ENCODE measurements at regions of chr22 and their contacts with region 1.

Region 1: DNA sequence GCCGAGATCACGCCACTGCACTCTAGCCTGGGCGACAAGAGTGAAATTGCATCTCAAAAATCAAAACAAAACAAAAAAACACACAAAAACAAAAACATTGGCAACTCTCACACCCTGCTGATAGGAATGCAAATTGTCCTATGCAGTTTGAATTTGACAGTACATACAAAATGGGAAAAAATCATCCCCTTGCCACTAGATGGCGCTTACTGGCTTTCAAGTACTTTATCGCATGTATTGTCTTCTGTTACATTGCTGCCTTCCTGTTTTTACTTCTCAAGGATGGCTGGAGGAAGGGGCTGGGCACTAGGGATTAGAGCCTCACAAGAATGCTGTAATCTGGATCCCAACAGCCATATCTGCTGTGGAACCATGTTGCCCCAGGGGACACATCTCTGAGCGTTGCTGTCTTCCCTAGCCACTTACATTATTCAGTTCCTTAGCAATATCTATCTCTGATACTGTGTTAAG is 59.4 kb upstream of the A4GALT start:
- DNase-seq: peak; percentile 87
- ATAC-seq: peak; percentile 86
- H3K4me3 ChIP-seq: no peak overlapping the region
- H3K27ac ChIP-seq: no peak overlapping the region
- H3K4me1 ChIP-seq: peaks cover 13% of the 10 kb centered on the region; the same call in 1 of the 2 replicates
- H3K27me3 ChIP-seq: no peaks in the 10 kb centered on the region; a peak in 2 of 5 replicates
- CTCF ChIP-seq: peak; percentile 94
- EP300 ChIP-seq: no peak
- POLR2A ChIP-seq: no peak
- RAD21 ChIP-seq: peak; percentile 69

Region 2: GRCh38 chr22:42662114-42663021 is 117.7 kb before region 1 on chr22:
- CTCF ChIA-PET with region 1: interaction called, 13 read pairs
- POLR2A ChIA-PET with region 1: no interaction called
- in situ Hi-C with region 1: no loop called
- intact Hi-C with region 1: no loop called
- DNase-seq: no peak
- ATAC-seq: peak; percentile 90
- H3K4me3 ChIP-seq: peak overlapping the region; percentile 48 to 81 (median 49); a peak in 5 of 6 replicates
- H3K27ac ChIP-seq: no peak overlapping the region
- H3K4me1 ChIP-seq: peaks cover 17% of the 10 kb centered on the region
- H3K27me3 ChIP-seq: peaks cover 0 to 14% of the 10 kb centered on the region in 2 experiments; a peak in 1 of 5 replicates
- CTCF ChIP-seq: peak; percentile 69
- EP300 ChIP-seq: no peak
- POLR2A ChIP-seq: peak; percentile 20 to 44; a peak in 2 of 4 replicates
- RAD21 ChIP-seq: peak; percentile 81

Region 3: GRCh38 chr22:42799461-42800405 is 19.6 kb after region 1 on chr22:
- CTCF ChIA-PET with region 1: interaction called, 4 read pairs
- POLR2A ChIA-PET with region 1: interaction called, 5 read pairs
- in situ Hi-C with region 1: no loop called
- intact Hi-C with region 1: loop called (anchors 2 kb)
- DNase-seq: no peak
- ATAC-seq: no peak
- H3K4me3 ChIP-seq: no peak overlapping the region
- H3K27ac ChIP-seq: peak overlapping the region; percentile 68
- H3K4me1 ChIP-seq: peaks cover 58% of the 10 kb centered on the region
- H3K27me3 ChIP-seq: no peaks in the 10 kb centered on the region
- CTCF ChIP-seq: no peak
- EP300 ChIP-seq: no peak
- POLR2A ChIP-seq: no peak
- RAD21 ChIP-seq: no peak

Region 4: GRCh38 chr22:42863349-42863961 is 83.3 kb after region 1 on chr22:
- CTCF ChIA-PET with region 1: interaction called, 30 read pairs
- POLR2A ChIA-PET with region 1: no interaction called
- in situ Hi-C with region 1: no loop called
- intact Hi-C with region 1: loop called (anchors 5 kb)
- DNase-seq: no peak
- ATAC-seq: no peak
- H3K4me3 ChIP-seq: no peak overlapping the region
- H3K27ac ChIP-seq: no peak overlapping the region
- H3K4me1 ChIP-seq: peaks cover 26% of the 10 kb centered on the region
- H3K27me3 ChIP-seq: no peaks in the 10 kb centered on the region
- CTCF ChIP-seq: no peak
- EP300 ChIP-seq: no peak
- POLR2A ChIP-seq: no peak
- RAD21 ChIP-seq: no peak

Region 5: DNA sequence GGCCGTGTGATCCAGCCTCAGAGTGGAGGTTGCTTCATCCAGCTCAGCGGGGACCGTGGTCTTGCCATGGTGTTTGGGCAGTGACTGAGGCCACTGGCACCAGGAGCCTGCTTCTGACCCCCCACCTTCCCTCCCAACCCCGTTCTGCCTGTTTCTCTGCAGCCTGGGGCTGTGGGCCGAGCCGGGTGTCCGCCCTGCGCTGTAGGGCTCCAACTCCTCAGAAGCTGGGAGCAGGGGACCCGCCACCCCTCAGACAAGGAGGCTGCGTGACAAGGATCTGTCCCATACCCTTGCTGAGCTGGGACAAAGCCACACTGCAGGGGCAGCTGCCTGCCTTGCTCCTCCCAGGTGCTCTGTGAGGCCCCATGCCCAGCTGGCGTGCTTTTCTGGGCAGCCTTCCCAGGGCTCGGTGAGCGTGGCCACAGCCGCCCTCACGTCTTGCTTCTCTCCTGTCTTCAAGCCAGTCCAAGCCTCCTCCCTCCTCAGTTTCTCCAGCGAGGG is 88.7 kb after region 1 on chr22:
- CTCF ChIA-PET with region 1: interaction called, 30 read pairs
- POLR2A ChIA-PET with region 1: no interaction called
- in situ Hi-C with region 1: no loop called
- intact Hi-C with region 1: loop called (anchors 5 kb)
- DNase-seq: no peak
- ATAC-seq: no peak
- H3K4me3 ChIP-seq: no peak overlapping the region
- H3K27ac ChIP-seq: no peak overlapping the region
- H3K4me1 ChIP-seq: peaks cover 9% of the 10 kb centered on the region; the same call in 1 of the 2 replicates
- H3K27me3 ChIP-seq: no peaks in the 10 kb centered on the region
- CTCF ChIP-seq: no peak
- EP300 ChIP-seq: no peak
- POLR2A ChIP-seq: no peak
- RAD21 ChIP-seq: no peak

Measured in HepG2 (cell line).